Activated CD8-positive, alpha-beta T cell treated with anti-CD3 and anti-CD28 coated beads, Interleukin-2, amount 10 ng/mL, durations not matched to agents 7 days and 5 days (primary cell): ENCODE measurements at regions of chr12 and their contacts with region 1.

Region 1: DNA sequence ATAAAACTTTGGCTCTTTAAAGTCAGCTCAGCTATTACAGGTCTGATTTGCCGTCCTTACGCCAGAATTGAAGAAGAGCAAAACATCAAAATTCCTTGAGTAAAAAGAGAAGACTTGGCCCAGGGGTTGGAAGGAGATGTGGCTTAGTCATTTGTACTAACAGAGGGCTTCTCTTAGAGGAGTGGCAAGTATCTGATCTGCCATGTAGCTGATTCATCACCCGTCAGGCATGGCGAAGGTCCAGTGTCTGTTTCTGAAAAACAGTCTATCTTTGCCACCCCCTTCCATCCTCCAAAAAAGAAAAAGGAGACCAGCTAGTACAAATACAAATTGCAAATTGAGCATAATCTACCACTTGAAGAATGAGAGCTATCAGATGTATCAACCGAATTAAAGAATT is 91.9 kb downstream of the RAD52 start:
- DNase-seq: no peak
- ATAC-seq: no peak
- H3K4me3 Mint-ChIP-seq: no peak overlapping the region
- H3K27ac Mint-ChIP-seq: peak overlapping the region; percentile 0
- H3K4me1 Mint-ChIP-seq: peaks cover 15% of the 10 kb centered on the region
- H3K27me3 Mint-ChIP-seq: no peaks in the 10 kb centered on the region

Region 2: GRCh38 chr12:818733-819132 is 38.9 kb before region 1 on chr12:
- CTCF ChIA-PET with region 1: interaction called, 21 read pairs
- POLR2A ChIA-PET with region 1: no interaction called
- DNase-seq: no peak
- ATAC-seq: no peak
- H3K4me3 Mint-ChIP-seq: no peak overlapping the region
- H3K27ac Mint-ChIP-seq: no peak overlapping the region
- H3K4me1 Mint-ChIP-seq: peaks cover 47% of the 10 kb centered on the region
- H3K27me3 Mint-ChIP-seq: no peaks in the 10 kb centered on the region